Activated T-helper 1 cell treated with anti-CD3 and anti-CD28 coated beads, Interleukin-12 subunit alpha, Interleukin-12 subunit beta, Interleukin-2, Interleukin-4 antibody, amounts not matched to agents 30 ng/mL and 10 ng/mL and 1 ng/mL, durations not matched to agents 14 hours and 24 hours and 36 hours (primary cell): ENCODE measurements at regions of chr6 and their contacts with region 1.

Region 1: GRCh38 chr6:149648148-149649145 is at the start of gene KATNA1:
- DNase-seq: peak; percentile 89
- H3K4me3 Mint-ChIP-seq: peak within 1 kb of the TSS; percentile 96
- H3K27ac Mint-ChIP-seq: peak within 1 kb of the TSS; percentile 83
- H3K4me1 Mint-ChIP-seq: peaks cover 31% of the 10 kb centered on the region
- H3K27me3 Mint-ChIP-seq: no peaks in the 10 kb centered on the region
- total RNA-seq, gene KATNA1: 20.8 and 22.1 TPM in 2 replicates

Region 2: GRCh38 chr6:149686230-149686629 is 37.8 kb after region 1 on chr6:
- intact Hi-C with region 1: loop called (anchors 5 kb)
- DNase-seq: no peak
- H3K4me3 Mint-ChIP-seq: no peak overlapping the region
- H3K27ac Mint-ChIP-seq: peak overlapping the region; percentile 34
- H3K4me1 Mint-ChIP-seq: peaks cover 21% of the 10 kb centered on the region
- H3K27me3 Mint-ChIP-seq: no peaks in the 10 kb centered on the region

Region 3: GRCh38 chr6:149717588-149718458 is 69.4 kb after region 1 on chr6 and contains the start of gene LATS1:
- intact Hi-C with region 1: loop called (anchors 1 kb)
- DNase-seq: peak; percentile 90
- H3K4me3 Mint-ChIP-seq: peak within 1 kb of the TSS; percentile 93
- H3K27ac Mint-ChIP-seq: peak within 1 kb of the TSS; percentile 91
- H3K4me1 Mint-ChIP-seq: peaks cover 31% of the 10 kb centered on the region
- H3K27me3 Mint-ChIP-seq: no peaks in the 10 kb centered on the region
- total RNA-seq, gene LATS1: 33.1 and 34.0 TPM in 2 replicates

Region 4: GRCh38 chr6:149746147-149746946 is 97.9 kb after region 1 on chr6 and contains the start of gene NUP43:
- intact Hi-C with region 1: loop called (anchors 1 kb)
- DNase-seq: peak; percentile 90
- H3K4me3 Mint-ChIP-seq: peak within 1 kb of the TSS; percentile 99
- H3K27ac Mint-ChIP-seq: peak within 1 kb of the TSS; percentile 87
- H3K4me1 Mint-ChIP-seq: peaks cover 31% of the 10 kb centered on the region
- H3K27me3 Mint-ChIP-seq: no peaks in the 10 kb centered on the region
- total RNA-seq, gene NUP43: 81.3 and 90.5 TPM in 2 replicates